Transverse colon (tissue), 4 donors: ENCODE measurements at regions of chr10 and their contacts with region 1.

Region 1: DNA sequence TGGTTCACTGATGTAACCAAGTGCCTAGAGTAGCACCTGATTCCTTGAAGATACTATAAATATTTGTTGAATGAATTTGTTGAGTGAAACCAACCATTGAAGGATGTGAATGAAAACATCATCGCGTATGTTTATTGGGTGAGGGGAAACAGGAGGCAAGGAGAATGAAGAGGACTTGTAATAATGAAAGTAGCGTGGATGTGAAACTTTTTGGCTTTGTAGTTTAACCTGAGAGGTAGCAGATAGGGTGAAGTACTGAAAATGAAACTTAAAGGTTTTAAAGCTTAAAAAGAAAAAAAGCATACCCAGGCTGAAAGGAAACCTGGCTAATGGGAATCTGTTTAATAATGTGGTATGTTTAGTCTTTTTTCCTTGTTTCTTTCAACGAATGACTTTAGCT is 5.2 kb downstream of the CCNY start:
- DNase-seq: no peak
- H3K4me3 ChIP-seq: no peak overlapping the region
- H3K27ac ChIP-seq: no peak overlapping the region
- H3K4me1 ChIP-seq: peaks cover 18 to 55% (median 32%) of the 10 kb centered on the region in 4 donors
- H3K27me3 ChIP-seq: no peaks in the 10 kb centered on the region
- CTCF ChIP-seq: no peak
- EP300 ChIP-seq: no peak
- POLR2A ChIP-seq: no peak

Region 2: GRCh38 chr10:35398355-35398754 is 56.8 kb after region 1 on chr10:
- in situ Hi-C with region 1: no loop called
- intact Hi-C with region 1: loop called (anchors 1 kb)
- DNase-seq: no peak
- H3K4me3 ChIP-seq: no peak overlapping the region
- H3K27ac ChIP-seq: no peak overlapping the region
- H3K4me1 ChIP-seq: peaks cover 0 to 37% (median 18%) of the 10 kb centered on the region in 4 donors
- H3K27me3 ChIP-seq: no peaks in the 10 kb centered on the region
- CTCF ChIP-seq: no peak
- EP300 ChIP-seq: no peak
- POLR2A ChIP-seq: no peak